Right ventricle myocardium inferior (tissue), 1 donor: ENCODE measurements at regions of chr10 and their contacts with region 1.

Region 1: DNA sequence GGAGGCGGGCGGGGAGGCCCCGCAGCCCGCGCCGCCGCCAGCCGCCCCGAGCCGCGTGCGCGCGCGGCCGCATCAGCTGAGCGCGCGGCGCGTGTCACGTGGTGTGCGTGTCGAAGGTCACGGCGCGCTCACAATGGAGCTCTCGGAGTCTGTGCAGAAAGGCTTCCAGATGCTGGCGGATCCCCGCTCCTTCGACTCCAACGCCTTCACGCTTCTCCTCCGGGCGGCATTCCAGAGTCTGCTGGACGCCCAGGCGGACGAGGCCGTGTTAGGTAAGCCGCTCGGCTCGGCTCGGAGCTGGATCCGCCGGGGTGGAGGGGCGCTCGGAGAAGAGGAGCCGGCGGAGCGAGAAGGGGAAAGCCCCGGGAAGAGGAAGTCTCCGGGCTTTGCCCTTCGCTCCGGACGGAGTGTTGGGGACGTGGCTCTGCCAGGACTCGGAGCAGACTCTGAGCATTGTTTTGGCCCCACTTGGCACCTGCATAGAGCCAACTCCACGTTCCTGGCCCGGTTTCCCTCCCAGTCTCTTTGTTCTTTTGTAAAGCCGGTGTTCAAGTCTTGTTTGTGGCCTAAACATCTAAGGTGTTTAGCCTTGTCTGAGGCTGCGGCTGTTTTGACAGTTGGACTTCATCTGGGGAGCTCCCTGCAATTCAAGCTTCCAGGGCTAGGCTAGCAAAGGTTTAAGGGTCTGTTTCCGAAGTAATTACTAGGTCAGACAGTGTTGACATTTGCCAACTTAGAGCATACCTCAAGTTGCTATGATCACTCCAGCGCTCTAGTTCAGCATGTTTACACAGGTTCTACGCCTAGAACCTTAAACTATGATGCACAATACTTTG is at the start of gene COMMD3:
- DNase-seq: peak; percentile 96
- ATAC-seq: peak; percentile 92
- total RNA-seq, gene COMMD3: 89.9 TPM

Region 2: GRCh38 chr10:22067099-22067498 is 249.4 kb before region 1 on chr10:
- intact Hi-C with region 1: no loop called
- DNase-seq: no peak
- ATAC-seq: no peak

Region 3: GRCh38 chr10:22228943-22229801 is 87.3 kb before region 1 on chr10:
- intact Hi-C with region 1: loop called (anchors 2 kb)
- DNase-seq: peak; percentile 90
- ATAC-seq: peak; percentile 99